ENCODE measurements at regions of chr9 and their contacts with region 1.

Region 1: DNA sequence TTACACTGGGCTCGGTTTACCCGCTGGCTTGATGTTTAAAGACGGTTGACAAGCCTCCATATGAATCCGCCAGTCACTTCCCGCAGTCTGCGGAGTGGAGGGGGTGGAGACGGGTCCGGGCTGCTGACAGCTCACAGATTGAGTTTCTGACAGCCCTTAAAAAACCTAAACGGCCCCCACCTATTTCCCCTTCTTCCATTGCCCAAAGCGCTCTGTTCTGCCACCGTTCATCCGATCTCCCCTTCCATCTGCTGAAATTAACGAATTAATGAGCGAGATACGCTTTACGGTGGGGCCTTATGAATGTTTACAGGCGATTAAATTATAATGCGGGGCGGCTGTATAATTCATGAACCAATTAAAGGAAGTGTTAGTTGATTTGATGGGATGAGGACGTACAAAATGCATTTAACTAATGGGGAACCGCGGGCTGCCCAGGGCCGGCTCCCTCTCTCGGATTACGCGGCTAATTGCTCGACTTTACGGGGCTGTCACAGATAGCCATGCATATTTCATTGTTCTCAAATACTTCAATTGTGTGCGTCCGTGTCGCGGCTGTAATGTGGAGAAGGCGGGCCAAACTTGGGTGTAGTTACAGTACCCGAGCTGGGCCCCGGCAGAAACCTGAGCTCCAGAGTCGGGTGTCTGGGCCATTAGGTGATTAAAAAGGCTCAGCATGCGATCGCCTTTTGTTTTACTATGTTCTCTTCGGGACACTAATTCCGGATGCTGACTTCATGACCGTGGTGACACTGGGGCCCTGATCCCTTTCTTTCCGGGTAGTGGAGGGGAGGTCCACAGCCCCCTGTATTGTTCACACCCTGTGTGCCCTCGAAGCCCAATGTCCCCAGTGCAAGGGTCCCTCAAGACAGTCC is 74.9 kb downstream of the GTF3C4 start:
- DNase-seq: peak; percentile 61

Region 2: GRCh38 chr9:132669698-132670456 is 75.2 kb before region 1 on chr9 and contains the start of gene DDX31:
- CTCF ChIA-PET with region 1: no interaction called
- POLR2A ChIA-PET with region 1: interaction called, 10 read pairs
- DNase-seq: peak; percentile 79

Region 3: GRCh38 chr9:132780230-132781007 is 35.3 kb after region 1 on chr9:
- CTCF ChIA-PET with region 1: no interaction called
- POLR2A ChIA-PET with region 1: no interaction called
- DNase-seq: no peak